Heart left ventricle (tissue), 16 donors: ENCODE measurements at regions of chr1 and their contacts with region 1.

Region 1: GRCh38 chr1:147627435-147628110 is 42.8 kb downstream of the ACP6 start:
- DNase-seq: peak in 3 of 5 donors; percentile 48 to 62 (median 58)
- ATAC-seq: peak in 3 of 4 donors; percentile 71 to 78 (median 77)
- H3K4me3 ChIP-seq: no peak overlapping the region
- H3K27ac ChIP-seq: no peak overlapping the region
- H3K4me1 ChIP-seq: peaks cover 0 to 24% (median 0%) of the 10 kb centered on the region in 12 donors
- H3K27me3 ChIP-seq: no peaks in the 10 kb centered on the region
- CTCF ChIP-seq: peak; percentile 84 to 95 (median 91)
- POLR2A ChIP-seq: no peak

Region 2: GRCh38 chr1:147273409-147274336 is 353.9 kb before region 1 on chr1:
- intact Hi-C with region 1: loop called in 1 of 10 experiments (anchors 5 kb)
- DNase-seq: peak in 2 of 5 donors; percentile 22 to 30
- ATAC-seq: peak in 3 of 4 donors; percentile 66 to 89 (median 80)
- H3K4me3 ChIP-seq: no peak overlapping the region
- H3K27ac ChIP-seq: peak overlapping the region in 6 of 12 donors; percentile 2 to 61 (median 18)
- H3K4me1 ChIP-seq: peaks cover 0 to 16% (median 6%) of the 10 kb centered on the region in 12 donors
- H3K27me3 ChIP-seq: no peaks in the 10 kb centered on the region
- CTCF ChIP-seq: peak; percentile 29 to 73 (median 51)
- POLR2A ChIP-seq: no peak

Region 3: DNA sequence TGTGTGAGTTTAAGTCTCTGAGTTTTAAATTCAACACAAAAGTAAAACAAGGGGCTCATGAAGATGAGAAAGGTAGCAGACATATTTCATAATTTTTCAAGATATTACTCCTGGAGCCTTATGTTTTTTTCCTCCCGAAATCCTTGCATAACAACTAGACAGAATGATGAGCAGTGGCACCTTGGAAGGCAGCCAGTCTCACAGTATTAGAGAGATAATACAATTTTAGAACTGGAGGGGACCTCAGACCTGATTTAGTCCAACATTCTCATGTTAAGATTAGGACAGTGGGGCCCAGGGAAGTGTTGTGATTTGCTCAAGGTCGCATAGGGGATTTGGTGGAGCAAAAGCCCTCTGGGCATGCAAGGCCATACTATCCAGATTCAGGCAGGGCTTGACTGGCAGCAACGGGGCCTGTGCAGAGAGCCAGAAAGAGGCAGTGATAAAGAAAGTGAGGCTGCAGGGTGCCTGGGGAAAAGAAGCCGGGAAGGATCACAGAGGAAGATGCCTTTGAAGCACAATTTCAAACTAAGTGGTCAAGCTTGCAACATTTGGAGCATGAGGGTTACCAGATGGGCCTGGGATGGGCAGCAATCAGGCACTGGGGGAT is 117.7 kb before region 1 on chr1:
- intact Hi-C with region 1: loop called in 6 of 10 experiments (anchors 1 to 5 kb)
- DNase-seq: peak in 3 of 5 donors; percentile 45 to 57 (median 54)
- ATAC-seq: peak; percentile 84 to 92 (median 90)
- H3K4me3 ChIP-seq: peak overlapping the region in 3 of 12 donors; percentile 2 to 4 (median 3)
- H3K27ac ChIP-seq: peak overlapping the region in 10 of 12 donors; percentile 9 to 84 (median 58)
- H3K4me1 ChIP-seq: peaks cover 0 to 36% (median 10%) of the 10 kb centered on the region in 12 donors
- H3K27me3 ChIP-seq: no peaks in the 10 kb centered on the region
- CTCF ChIP-seq: no peak
- POLR2A ChIP-seq: no peak

Region 4: DNA sequence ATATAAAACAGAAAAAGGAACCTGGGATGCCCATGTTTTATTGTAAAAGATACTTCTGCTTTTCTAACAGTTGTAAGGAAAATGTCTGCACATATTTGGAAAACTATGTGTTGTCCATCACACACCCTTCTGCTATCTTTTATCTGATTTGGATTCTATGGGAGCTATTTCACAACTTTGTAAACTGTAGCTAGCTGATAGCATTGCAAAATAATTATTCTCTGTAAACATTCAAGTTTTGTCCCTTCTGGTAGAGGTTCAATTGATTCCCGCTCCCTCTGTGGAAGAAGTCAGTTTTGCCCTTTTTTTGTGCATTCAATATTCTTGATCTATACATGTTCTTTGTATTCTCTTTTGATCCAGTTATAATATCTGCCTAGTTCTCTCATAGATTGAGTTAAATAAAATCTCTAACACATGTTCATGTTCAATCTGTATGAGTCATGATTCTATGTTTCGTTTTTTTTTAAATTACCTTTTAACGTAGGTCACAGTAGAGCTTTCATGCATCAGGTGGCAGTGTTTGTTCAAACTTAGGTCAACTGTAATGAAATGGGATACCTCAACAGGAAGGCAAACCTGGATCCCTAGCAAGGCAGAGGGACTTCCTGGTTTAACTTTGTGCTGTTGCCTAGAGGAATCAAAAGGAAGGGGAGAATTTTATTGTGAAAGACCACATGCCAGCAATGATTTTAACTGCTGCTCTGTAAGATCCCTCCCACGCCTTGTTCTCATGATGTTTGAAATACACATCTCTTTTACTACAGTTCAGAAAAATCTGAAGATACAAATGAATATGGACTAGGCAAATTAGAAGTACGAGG is 112.3 kb before region 1 on chr1:
- intact Hi-C with region 1: loop called in 6 of 10 experiments (anchors 1 to 5 kb)
- DNase-seq: no peak
- ATAC-seq: peak; percentile 55 to 87 (median 78)
- H3K4me3 ChIP-seq: no peak overlapping the region
- H3K27ac ChIP-seq: peak overlapping the region in 11 of 12 donors; percentile 2 to 81 (median 52)
- H3K4me1 ChIP-seq: peaks cover 0 to 42% (median 20%) of the 10 kb centered on the region in 12 donors
- H3K27me3 ChIP-seq: no peaks in the 10 kb centered on the region
- CTCF ChIP-seq: peak in 7 of 12 donors; percentile 25 to 50 (median 41)
- POLR2A ChIP-seq: no peak

Region 5: GRCh38 chr1:147599362-147600118 is 28.0 kb before region 1 on chr1:
- intact Hi-C with region 1: loop called in 2 of 10 experiments (anchors 1 to 2 kb)
- DNase-seq: peak; percentile 98 to 99 (median 98)
- ATAC-seq: peak; percentile 89 to 96 (median 95)
- H3K4me3 ChIP-seq: peak overlapping the region; percentile 62 to 99 (median 78)
- H3K27ac ChIP-seq: peak overlapping the region; percentile 62 to 97 (median 90)
- H3K4me1 ChIP-seq: peaks cover 0 to 34% (median 16%) of the 10 kb centered on the region in 12 donors
- H3K27me3 ChIP-seq: no peaks in the 10 kb centered on the region
- CTCF ChIP-seq: no peak
- POLR2A ChIP-seq: peak; percentile 91 to 98